CD4-positive, alpha-beta memory T cell (primary cell): ENCODE measurements at regions of chr9 and their contacts with region 1.

Region 1: DNA sequence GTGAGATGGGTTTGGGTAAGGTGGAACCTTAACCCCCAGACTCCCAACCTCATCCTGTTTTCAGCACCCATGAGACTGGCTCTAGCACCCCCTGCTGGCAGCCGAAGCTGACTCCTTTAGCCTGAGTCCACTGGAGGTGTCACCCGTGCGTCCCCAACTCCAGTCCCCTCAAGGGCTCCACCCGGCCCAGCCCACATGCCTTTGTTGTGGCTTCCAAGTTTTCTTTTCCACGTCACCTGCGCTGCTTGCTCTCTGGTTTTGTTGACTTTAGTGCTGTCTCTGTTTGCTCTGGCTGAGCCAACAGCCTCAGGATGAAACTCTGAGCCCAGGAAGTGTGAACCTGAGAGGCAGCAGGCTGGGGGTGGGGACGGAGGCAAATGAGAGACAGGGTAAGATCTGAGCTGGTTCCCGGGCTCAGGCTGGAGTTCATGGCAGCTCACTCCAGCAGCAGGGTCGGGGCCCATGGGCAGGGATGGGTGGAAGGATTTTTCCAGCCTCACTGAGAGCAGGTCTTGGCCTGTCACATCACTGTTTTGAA is 13.2 kb upstream of the AQP7 start:
- DNase-seq: peak; percentile 97 to 98 (median 97)
- H3K4me3 ChIP-seq: peak overlapping the region; percentile 31 to 50
- H3K4me3 Mint-ChIP-seq: peak overlapping the region; percentile 71 to 92 (median 86)
- H3K27ac ChIP-seq: peak overlapping the region; percentile 65
- H3K27ac Mint-ChIP-seq: peak overlapping the region; percentile 92 to 99 (median 98)
- H3K4me1 ChIP-seq: peaks cover 54% of the 10 kb centered on the region
- H3K4me1 Mint-ChIP-seq: peaks cover 38 to 65% (median 57%) of the 10 kb centered on the region in 4 donors
- H3K27me3 ChIP-seq: no peaks in the 10 kb centered on the region
- H3K27me3 Mint-ChIP-seq: no peaks in the 10 kb centered on the region

Region 2: DNA sequence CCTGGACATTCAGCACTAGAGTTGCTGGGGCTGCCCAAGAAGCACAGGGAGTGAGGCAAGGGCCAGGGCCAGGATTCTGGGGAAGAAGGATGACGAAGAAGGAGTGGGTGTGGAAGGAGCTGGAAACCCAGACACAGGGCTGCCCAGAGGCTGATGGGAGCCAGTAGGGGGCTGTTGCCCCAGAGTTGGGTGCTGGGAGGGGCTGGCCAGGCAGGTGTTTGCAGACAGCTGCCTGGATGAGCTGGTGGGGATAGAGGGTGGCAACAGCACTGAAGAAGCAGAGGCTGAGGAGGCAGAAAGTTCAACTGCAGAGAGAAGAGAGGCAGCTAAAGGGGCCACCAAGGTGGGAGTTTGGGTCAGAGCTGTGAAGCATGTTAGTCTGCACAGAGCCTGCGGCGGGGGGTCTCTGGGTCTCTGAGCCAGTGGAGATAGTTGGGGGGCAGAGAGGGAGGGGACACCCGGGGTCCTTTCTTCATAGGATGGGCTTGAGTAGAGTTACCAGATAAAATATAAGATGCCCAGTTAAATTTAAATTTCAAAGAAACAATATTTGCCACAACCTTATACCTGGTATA is 10.7 kb before region 1 on chr9:
- CTCF ChIA-PET with region 1: interaction called, 103 read pairs
- POLR2A ChIA-PET with region 1: interaction called, 37 read pairs
- intact Hi-C with region 1: loop called (anchors 1 kb)
- DNase-seq: no peak
- H3K4me3 ChIP-seq: no peak overlapping the region
- H3K4me3 Mint-ChIP-seq: no peak overlapping the region
- H3K27ac ChIP-seq: no peak overlapping the region
- H3K27ac Mint-ChIP-seq: peak overlapping the region in 6 of 7 donors; percentile 63 to 92 (median 84)
- H3K4me1 ChIP-seq: peaks cover 10% of the 10 kb centered on the region
- H3K4me1 Mint-ChIP-seq: peaks cover 6 to 16% (median 11%) of the 10 kb centered on the region in 4 donors
- H3K27me3 ChIP-seq: no peaks in the 10 kb centered on the region
- H3K27me3 Mint-ChIP-seq: no peaks in the 10 kb centered on the region

Region 3: DNA sequence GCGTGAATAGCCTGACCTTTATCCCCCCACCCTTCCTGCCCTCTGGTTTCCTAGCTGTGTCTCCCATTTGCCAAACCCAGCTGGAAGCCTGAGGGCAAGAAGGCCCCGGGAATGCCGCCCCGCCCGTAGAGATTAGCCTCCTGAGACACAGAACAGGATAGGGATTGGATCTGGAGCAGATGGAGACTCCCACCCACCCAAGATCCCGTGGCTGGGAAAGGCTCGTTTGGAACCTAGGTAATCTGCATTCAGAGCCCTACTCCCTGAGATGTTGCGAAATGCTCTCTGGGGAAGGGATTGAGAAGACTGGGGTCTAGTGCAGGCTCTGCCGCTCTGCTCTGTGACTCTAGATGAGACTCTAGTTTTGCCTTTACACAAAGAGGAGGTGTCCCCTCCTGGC is 20.9 kb after region 1 on chr9:
- CTCF ChIA-PET with region 1: interaction called, 345 read pairs
- POLR2A ChIA-PET with region 1: interaction called, 64 read pairs
- intact Hi-C with region 1: no loop called
- DNase-seq: no peak
- H3K4me3 ChIP-seq: no peak overlapping the region
- H3K4me3 Mint-ChIP-seq: no peak overlapping the region
- H3K27ac ChIP-seq: no peak overlapping the region
- H3K27ac Mint-ChIP-seq: peak overlapping the region in 4 of 7 donors; percentile 32 to 81 (median 41)
- H3K4me1 ChIP-seq: peaks cover 16% of the 10 kb centered on the region
- H3K4me1 Mint-ChIP-seq: peaks cover 18 to 55% (median 31%) of the 10 kb centered on the region in 4 donors
- H3K27me3 ChIP-seq: no peaks in the 10 kb centered on the region
- H3K27me3 Mint-ChIP-seq: no peaks in the 10 kb centered on the region

Region 4: GRCh38 chr9:33452828-33453271 is 37.3 kb after region 1 on chr9:
- CTCF ChIA-PET with region 1: interaction called, 345 read pairs
- POLR2A ChIA-PET with region 1: interaction called, 219 read pairs
- intact Hi-C with region 1: loop called (anchors 1 kb)
- DNase-seq: peak; percentile 24 to 50 (median 40)
- H3K4me3 ChIP-seq: no peak overlapping the region
- H3K4me3 Mint-ChIP-seq: peak overlapping the region in 7 of 8 donors; percentile 3 to 65 (median 32)
- H3K27ac ChIP-seq: peak overlapping the region; percentile 36
- H3K27ac Mint-ChIP-seq: peak overlapping the region; percentile 55 to 87 (median 83)
- H3K4me1 ChIP-seq: peaks cover 69% of the 10 kb centered on the region
- H3K4me1 Mint-ChIP-seq: peaks cover 43 to 70% (median 57%) of the 10 kb centered on the region in 4 donors
- H3K27me3 ChIP-seq: no peaks in the 10 kb centered on the region
- H3K27me3 Mint-ChIP-seq: no peaks in the 10 kb centered on the region

Region 5: GRCh38 chr9:33466565-33467495 is 51.3 kb after region 1 on chr9:
- CTCF ChIA-PET with region 1: interaction called, 113 read pairs
- POLR2A ChIA-PET with region 1: interaction called, 73 read pairs
- intact Hi-C with region 1: loop called (anchors 1 kb)
- DNase-seq: peak; percentile 57 to 77 (median 61)
- H3K4me3 ChIP-seq: no peak overlapping the region
- H3K4me3 Mint-ChIP-seq: no peak overlapping the region
- H3K27ac ChIP-seq: no peak overlapping the region
- H3K27ac Mint-ChIP-seq: peak overlapping the region; percentile 13 to 83 (median 50)
- H3K4me1 ChIP-seq: peaks cover 6% of the 10 kb centered on the region
- H3K4me1 Mint-ChIP-seq: peaks cover 5 to 12% (median 7%) of the 10 kb centered on the region in 4 donors
- H3K27me3 ChIP-seq: no peaks in the 10 kb centered on the region
- H3K27me3 Mint-ChIP-seq: no peaks in the 10 kb centered on the region

Region 6: DNA sequence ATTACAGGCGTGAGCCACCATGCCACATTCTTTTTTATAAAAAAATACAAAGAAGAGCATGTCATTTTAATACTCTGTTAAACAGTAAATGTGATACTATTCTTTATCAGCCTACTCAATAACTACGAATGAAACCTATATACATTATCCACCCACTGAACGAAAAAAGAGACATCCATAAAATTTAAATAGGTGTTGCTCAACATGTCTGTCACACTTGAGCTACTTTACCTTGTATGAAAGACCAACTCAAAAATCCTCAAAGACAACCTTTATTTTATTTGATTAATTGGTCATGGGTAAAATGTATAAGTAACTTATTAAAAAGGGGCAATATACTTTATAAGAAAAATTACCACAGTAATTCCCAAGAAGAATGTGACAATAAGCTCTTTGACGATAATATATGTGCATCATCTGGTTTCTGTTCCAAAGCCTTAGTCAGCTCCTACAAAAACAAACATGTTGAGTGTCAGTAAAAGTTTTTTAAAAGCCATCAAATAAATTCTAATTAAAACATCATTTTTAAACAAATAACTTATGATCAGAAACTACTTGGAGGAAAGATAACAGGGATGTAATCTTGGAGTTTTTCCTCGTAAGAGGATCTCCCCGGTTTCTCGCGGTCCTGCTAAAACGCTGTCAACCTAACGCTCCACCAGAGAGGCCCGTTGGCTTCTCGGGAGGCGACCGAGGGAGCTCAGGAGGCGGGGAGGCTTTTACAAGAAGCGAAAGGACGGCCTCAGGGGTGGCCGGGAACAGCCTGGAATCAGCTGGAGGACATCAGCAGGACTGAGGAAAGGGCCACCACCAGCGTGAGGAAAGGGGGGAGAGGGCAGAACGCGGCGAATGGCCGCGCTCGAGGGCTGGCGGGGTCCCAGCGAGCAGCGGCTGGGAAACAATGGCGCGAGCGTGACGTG is 95.0 kb after region 1 on chr9:
- CTCF ChIA-PET with region 1: no interaction called
- POLR2A ChIA-PET with region 1: no interaction called
- intact Hi-C with region 1: no loop called
- DNase-seq: peak; percentile 25 to 45 (median 33)
- H3K4me3 ChIP-seq: peak overlapping the region; percentile 41 to 76
- H3K4me3 Mint-ChIP-seq: peak overlapping the region; percentile 95 to 98 (median 96)
- H3K27ac ChIP-seq: no peak overlapping the region
- H3K27ac Mint-ChIP-seq: peak overlapping the region; percentile 52 to 97 (median 93)
- H3K4me1 ChIP-seq: no peaks in the 10 kb centered on the region
- H3K4me1 Mint-ChIP-seq: peaks cover 2 to 4% (median 3%) of the 10 kb centered on the region in 4 donors
- H3K27me3 ChIP-seq: no peaks in the 10 kb centered on the region
- H3K27me3 Mint-ChIP-seq: peaks cover 0 to 2% of the 10 kb centered on the region in 2 donors